ENCODE measurements at regions of chr12 and their contacts with region 1.

Region 1: GRCh38 chr12:40969796-40970195 is 218.3 kb upstream of the PDZRN4 start:
- DNase-seq: no peak
- ATAC-seq: peak; percentile 50 to 70
- H3K4me3 ChIP-seq: no peak overlapping the region
- H3K27ac ChIP-seq: no peak overlapping the region
- H3K4me1 ChIP-seq: no peaks in the 10 kb centered on the region
- H3K27me3 ChIP-seq: no peaks in the 10 kb centered on the region
- CTCF ChIP-seq: no peak

Region 2: DNA sequence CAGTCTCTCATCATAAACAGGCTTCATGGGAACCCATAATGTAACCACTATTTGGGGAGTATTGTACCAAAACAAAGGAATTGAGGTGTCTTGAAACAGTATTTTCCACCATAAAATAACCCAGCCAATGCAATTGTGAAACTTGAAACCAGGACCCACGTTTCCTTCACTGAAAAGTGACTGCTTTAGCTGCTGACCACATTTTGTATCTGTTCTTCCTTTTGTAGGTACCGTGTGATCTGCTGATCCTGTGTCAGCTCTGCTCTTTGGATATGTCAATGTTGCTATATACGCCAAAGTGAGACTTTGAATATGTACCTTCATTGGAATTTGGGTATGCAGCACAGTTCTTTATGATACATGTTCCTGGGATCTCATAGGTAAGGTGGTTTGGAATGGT is 372.7 kb before region 1 on chr12:
- intact Hi-C with region 1: no loop called
- DNase-seq: no peak
- ATAC-seq: no peak
- H3K4me3 ChIP-seq: no peak overlapping the region
- H3K27ac ChIP-seq: no peak overlapping the region
- H3K4me1 ChIP-seq: no peaks in the 10 kb centered on the region
- H3K27me3 ChIP-seq: no peaks in the 10 kb centered on the region
- CTCF ChIP-seq: no peak

Region 3: DNA sequence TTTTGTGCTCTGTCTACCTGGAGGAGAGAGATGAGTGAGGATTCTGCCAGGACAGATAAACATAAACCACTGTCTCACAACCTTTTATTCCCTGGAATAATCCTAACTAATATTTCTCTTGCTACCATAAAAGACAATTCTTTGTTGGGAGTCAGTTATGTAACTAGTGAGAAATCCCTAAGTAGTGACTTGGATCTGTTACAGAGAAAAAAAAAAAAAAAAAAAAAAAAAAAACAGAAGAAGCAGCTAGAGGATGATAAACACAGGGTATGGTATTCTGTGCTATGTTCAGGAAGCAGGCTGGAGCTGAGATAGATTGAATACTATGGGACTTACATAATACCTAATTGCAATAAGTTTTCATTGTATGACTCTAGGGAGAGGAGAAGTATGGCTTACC is 98.8 kb before region 1 on chr12:
- intact Hi-C with region 1: no loop called
- DNase-seq: no peak
- ATAC-seq: no peak
- H3K4me3 ChIP-seq: no peak overlapping the region
- H3K27ac ChIP-seq: no peak overlapping the region
- H3K4me1 ChIP-seq: no peaks in the 10 kb centered on the region
- H3K27me3 ChIP-seq: no peaks in the 10 kb centered on the region
- CTCF ChIP-seq: no peak

Region 4: DNA sequence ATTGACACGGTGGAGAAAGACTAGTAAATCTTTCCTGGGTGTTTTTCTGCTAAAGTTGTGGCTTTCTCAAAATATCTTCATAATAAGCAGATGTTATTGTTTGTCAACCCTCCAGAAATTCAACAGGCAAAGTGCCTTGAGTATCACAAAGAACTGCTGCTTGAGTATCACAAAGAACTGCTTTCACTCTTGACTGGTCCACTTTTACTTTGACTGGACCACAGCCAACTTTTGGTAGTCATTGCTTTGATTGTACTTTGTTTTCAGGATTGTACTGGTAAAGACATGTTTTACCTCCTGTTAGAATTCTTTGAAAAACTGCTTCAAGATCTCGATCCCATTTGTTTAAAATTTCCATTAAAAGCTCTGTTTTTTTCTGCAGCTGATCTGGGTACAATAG is 281.0 kb after region 1 on chr12:
- intact Hi-C with region 1: loop called (anchors 5 kb)
- DNase-seq: no peak
- ATAC-seq: no peak
- H3K4me3 ChIP-seq: no peak overlapping the region
- H3K27ac ChIP-seq: no peak overlapping the region
- H3K4me1 ChIP-seq: no peaks in the 10 kb centered on the region
- H3K27me3 ChIP-seq: no peaks in the 10 kb centered on the region
- CTCF ChIP-seq: no peak

Measured in lower lobe of right lung (tissue), 2 donors.